Posterior vena cava (tissue), 2 donors: ENCODE measurements at regions of chr1 and their contacts with region 1.

Region 1: DNA sequence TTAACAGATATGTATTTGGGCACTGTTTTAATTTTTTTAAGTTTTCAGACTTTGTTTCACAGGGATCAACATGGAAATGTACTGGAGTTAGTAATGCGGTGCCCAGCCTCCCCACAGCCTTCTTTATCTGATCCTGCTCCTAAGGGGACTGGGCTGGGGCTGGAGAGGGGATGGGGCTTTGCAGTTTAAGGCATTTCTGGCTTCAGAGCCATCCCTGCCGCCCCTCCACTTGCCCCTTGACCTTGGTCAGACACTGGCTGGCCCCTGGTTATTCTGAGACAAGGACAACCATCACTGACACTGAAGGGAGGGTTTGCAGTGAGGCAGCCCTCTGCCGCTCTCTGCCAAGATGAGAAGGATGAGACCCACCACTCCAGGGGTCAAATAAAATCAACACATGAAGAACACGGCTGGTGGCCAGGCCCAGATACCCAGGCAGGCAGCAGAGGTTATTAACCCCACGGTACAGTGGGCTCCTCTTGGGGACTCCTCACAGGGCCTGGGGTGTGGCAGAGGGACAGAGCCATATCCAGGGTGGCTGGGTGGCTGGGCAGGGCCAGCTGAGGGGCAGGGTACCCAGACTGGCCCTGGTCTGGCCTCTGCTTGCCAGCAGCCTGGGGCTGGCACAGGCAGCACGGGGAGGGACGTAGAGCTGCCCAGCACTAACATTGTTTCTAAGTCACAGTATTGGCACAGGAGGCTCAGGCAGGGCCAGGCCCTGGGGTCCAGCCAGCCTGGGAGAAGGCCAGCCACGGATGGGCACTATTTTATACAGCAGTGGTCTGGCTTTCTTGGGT is 7.2 kb upstream of the UBE2U start:
- DNase-seq: no peak

Region 2: DNA sequence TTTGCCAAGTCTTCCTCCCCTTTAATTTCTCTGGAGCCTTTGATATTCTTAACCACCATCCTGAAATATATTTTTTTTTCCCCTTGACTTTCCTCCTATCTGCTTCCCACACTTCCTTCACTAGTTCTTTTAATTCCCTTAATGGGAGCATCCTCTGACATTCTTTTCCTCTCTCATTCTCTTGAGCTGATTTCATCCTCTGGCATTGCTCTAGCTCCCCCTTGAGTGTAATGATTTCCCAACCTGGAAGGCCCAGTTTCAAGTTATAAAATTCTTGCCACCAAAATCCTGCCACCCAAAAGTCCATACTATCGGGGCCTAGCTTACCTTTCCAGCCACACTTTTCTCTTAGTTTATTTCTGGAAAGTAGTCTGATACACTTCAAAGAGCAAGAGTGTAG is 32.3 kb before region 1 on chr1:
- intact Hi-C with region 1: loop called in 1 of 2 experiments (anchors 1 kb)
- DNase-seq: no peak